ENCODE measurements at regions of chr14 and their contacts with region 1.

Region 1: GRCh38 chr14:56294130-56294529 is 175.9 kb downstream of the PELI2 start:
- DNase-seq: peak in 1 of 2 experiments; percentile 58
- H3K4me3 ChIP-seq: no peak overlapping the region
- H3K27ac ChIP-seq: no peak overlapping the region
- H3K4me1 ChIP-seq: no peaks in the 10 kb centered on the region
- H3K27me3 ChIP-seq: no peaks in the 10 kb centered on the region
- CTCF ChIP-seq: peak; percentile 40 to 63 (median 58); a peak in 3 of 4 replicates
- EP300 ChIP-seq: no peak
- POLR2A ChIP-seq: no peak
- RAD21 ChIP-seq: peak; percentile 58 to 69

Region 2: DNA sequence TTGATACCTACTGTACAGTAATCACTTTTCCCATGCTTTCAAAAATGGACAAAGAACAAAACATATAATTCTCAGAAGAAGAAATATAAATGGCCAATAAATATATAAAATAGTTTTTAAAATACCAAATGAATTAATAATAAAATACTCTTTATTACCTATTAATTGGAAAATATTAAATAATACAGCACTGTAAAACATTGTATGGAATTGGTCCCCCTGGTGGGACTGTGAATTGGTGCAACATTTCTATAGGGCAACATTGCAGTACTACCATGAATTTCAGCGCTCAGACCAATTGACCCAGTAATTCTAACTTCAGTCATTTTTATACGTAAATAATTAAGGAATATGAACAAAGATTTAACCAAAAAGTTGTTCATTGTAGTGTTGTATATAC is 13.3 kb before region 1 on chr14:
- CTCF ChIA-PET with region 1: interaction called, 14 read pairs
- POLR2A ChIA-PET with region 1: no interaction called
- DNase-seq: no peak
- H3K4me3 ChIP-seq: no peak overlapping the region
- H3K27ac ChIP-seq: no peak overlapping the region
- H3K4me1 ChIP-seq: no peaks in the 10 kb centered on the region
- H3K27me3 ChIP-seq: no peaks in the 10 kb centered on the region
- CTCF ChIP-seq: no peak
- EP300 ChIP-seq: no peak
- POLR2A ChIP-seq: no peak
- RAD21 ChIP-seq: no peak; a peak in 1 of 4 replicates

Region 3: DNA sequence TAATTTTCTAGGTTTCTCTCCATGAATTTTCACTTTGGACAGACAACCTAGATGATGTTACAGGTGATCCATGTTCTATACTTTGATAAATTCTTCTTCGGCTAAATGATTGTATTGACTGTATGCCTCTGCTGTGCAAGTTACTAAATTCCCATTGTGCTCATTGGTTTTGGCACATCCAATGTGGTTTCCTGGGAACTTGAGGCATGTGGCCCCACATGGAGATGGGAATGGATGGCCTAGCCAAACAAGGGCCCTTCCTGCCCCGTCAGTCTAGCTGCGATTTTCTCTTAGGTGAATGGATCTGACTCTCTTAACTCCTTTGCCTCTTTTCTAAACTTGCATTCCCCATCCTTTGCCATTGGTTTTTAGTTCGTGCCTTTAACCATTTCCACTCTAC is 10.3 kb after region 1 on chr14:
- CTCF ChIA-PET with region 1: interaction called, 11 read pairs
- POLR2A ChIA-PET with region 1: no interaction called
- DNase-seq: no peak
- H3K4me3 ChIP-seq: no peak overlapping the region
- H3K27ac ChIP-seq: no peak overlapping the region
- H3K4me1 ChIP-seq: 0 out of 7 replicates have a peak, but pooled peaks cover 0 to 2% (median under 1%) of the 10 kb centered on the region in 4 experiments
- H3K27me3 ChIP-seq: no peaks in the 10 kb centered on the region
- CTCF ChIP-seq: no peak
- EP300 ChIP-seq: no peak
- POLR2A ChIP-seq: no peak
- RAD21 ChIP-seq: no peak

Region 4: GRCh38 chr14:56310643-56311042 is 16.5 kb after region 1 on chr14:
- CTCF ChIA-PET with region 1: interaction called, 23 read pairs
- POLR2A ChIA-PET with region 1: no interaction called
- DNase-seq: no peak
- H3K4me3 ChIP-seq: no peak overlapping the region
- H3K27ac ChIP-seq: no peak overlapping the region
- H3K4me1 ChIP-seq: no peaks in the 10 kb centered on the region
- H3K27me3 ChIP-seq: no peaks in the 10 kb centered on the region
- CTCF ChIP-seq: no peak
- EP300 ChIP-seq: no peak
- POLR2A ChIP-seq: no peak
- RAD21 ChIP-seq: no peak

Region 5: DNA sequence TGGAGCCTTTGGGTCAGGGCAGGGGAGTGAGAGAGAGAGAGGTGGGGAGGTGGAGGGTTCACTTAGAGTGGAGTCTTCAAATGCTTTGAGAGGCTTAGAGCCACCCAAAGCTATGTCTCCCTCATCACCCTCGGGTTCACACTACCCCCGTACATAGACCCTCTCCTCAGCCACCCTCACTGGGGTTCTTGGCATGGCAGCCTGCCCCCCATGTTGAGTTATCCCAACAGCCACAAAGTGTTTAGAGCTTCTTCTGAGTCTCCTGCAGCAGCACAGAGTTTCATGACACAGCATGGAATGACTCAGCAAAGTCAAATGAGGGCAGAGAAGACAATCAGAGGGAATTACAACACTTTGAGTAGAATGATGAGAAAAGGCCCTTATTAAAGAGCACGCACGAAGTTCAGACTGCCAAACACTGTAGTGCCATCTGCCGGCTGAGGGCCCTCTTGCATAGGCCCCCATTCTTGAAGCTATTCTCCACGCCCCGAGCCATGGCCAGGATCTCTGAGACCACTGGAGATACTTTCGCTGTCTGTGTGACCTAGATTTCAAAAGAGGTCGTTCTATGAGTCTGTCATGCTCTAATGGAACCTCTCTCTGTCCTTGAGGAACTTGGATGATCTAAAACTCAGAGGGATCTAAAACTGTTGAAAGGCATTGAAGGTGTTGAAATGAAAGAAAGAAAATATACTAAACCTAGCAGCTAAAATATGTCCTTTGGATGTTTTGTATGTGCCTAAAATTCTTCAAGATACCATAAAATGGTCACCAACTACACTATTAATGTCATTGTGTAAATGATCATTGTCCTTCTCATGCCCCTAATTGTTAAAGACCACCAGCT is 45.9 kb after region 1 on chr14:
- CTCF ChIA-PET with region 1: interaction called, 11 read pairs
- POLR2A ChIA-PET with region 1: no interaction called
- DNase-seq: peak in 1 of 2 experiments; percentile 56
- H3K4me3 ChIP-seq: no peak overlapping the region
- H3K27ac ChIP-seq: no peak overlapping the region
- H3K4me1 ChIP-seq: no peaks in the 10 kb centered on the region
- H3K27me3 ChIP-seq: no peaks in the 10 kb centered on the region
- CTCF ChIP-seq: peak; percentile 58 to 83 (median 74)
- EP300 ChIP-seq: no peak
- POLR2A ChIP-seq: no peak
- RAD21 ChIP-seq: peak; percentile 77 to 83

Measured in H1 (cell line).